Heart left ventricle (tissue), 16 donors: ENCODE measurements at regions of chr3 and their contacts with region 1.

Region 1: GRCh38 chr3:142723968-142724681 is at the start of gene TRPC1:
- DNase-seq: peak; percentile 77 to 84 (median 83)
- ATAC-seq: peak; percentile 80 to 96 (median 94)
- H3K4me3 ChIP-seq: peak within 1 kb of the TSS; percentile 72 to 96 (median 80)
- H3K27ac ChIP-seq: peak within 1 kb of the TSS; percentile 82 to 99 (median 91)
- H3K4me1 ChIP-seq: peaks cover 0 to 21% (median 6%) of the 10 kb centered on the region in 12 donors
- H3K27me3 ChIP-seq: peaks cover 0 to 14% (median 0%) of the 10 kb centered on the region in 9 donors
- CTCF ChIP-seq: no peak
- POLR2A ChIP-seq: peak; percentile 86 to 92
- total RNA-seq, gene TRPC1: 5.9 to 14.2 (median 11.2) TPM

Region 2: GRCh38 chr3:142578327-142579223 is 145.6 kb before region 1 on chr3 and contains the start of gene ATR:
- intact Hi-C with region 1: loop called in 3 of 10 experiments (anchors 2 to 10 kb)
- DNase-seq: peak; percentile 97 to 98 (median 98)
- ATAC-seq: peak; percentile 99
- H3K4me3 ChIP-seq: peak within 1 kb of the TSS; percentile 53 to 97 (median 88)
- H3K27ac ChIP-seq: peak within 1 kb of the TSS; percentile 72 to 97 (median 91)
- H3K4me1 ChIP-seq: peaks cover 0 to 50% (median 24%) of the 10 kb centered on the region in 12 donors
- H3K27me3 ChIP-seq: no peaks in the 10 kb centered on the region
- CTCF ChIP-seq: peak in 3 of 12 donors; percentile 8 to 18 (median 16)
- POLR2A ChIP-seq: no peak
- total RNA-seq, gene ATR: 10.3 to 17.0 (median 11.1) TPM

Region 3: GRCh38 chr3:142595951-142596725 is 128.0 kb before region 1 on chr3 and contains the start of gene PLS1:
- intact Hi-C with region 1: loop called in 4 of 10 experiments (anchors 5 to 10 kb)
- DNase-seq: peak; percentile 76 to 92 (median 84)
- ATAC-seq: peak; percentile 89 to 97 (median 97)
- H3K4me3 ChIP-seq: peak within 1 kb of the TSS; percentile 61 to 86 (median 72)
- H3K27ac ChIP-seq: peak within 1 kb of the TSS in 11 of 12 donors; percentile 11 to 70 (median 46)
- H3K4me1 ChIP-seq: peaks cover 0 to 17% (median 4%) of the 10 kb centered on the region in 12 donors
- H3K27me3 ChIP-seq: no peaks in the 10 kb centered on the region
- CTCF ChIP-seq: no peak
- POLR2A ChIP-seq: peak in 1 of 2 donors; percentile 70
- total RNA-seq, gene PLS1: 0.99 to 3.7 (median 1.7) TPM